MCF 10A (cell line): ENCODE measurements at regions of chr21 and their contacts with region 1.

Region 1: DNA sequence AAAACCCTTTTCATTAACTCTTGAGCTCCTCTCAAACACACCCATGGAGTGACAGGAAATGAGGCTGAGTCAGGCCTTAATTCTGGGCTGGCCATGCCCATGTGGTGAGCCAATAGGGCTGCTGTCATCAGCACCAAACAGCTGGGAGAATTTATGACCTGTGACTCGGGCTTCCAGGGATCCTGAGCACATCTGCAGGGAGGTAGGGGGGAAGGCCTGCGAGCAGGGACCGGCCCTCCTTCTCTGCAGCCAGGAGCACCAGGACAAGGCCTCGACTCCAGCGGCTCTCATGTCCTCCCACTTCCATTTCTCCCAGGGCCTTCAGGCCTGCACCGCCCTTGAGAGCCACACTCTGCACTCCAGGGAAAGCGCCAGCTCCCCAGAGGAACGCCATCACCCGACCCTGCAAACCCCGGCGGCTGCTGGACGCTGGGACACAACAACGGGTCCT is 14.6 kb downstream of the RIPK4 start:
- DNase-seq: peak; percentile 84
- H3K4me3 Mint-ChIP-seq: peak overlapping the region; percentile 64
- H3K27ac Mint-ChIP-seq: peak overlapping the region; percentile 87
- H3K4me1 Mint-ChIP-seq: peaks cover 32% of the 10 kb centered on the region
- H3K27me3 Mint-ChIP-seq: no peaks in the 10 kb centered on the region
- CTCF ChIP-seq: no peak

Region 2: GRCh38 chr21:41737656-41738324 is 14.5 kb before region 1 on chr21:
- CTCF ChIA-PET with region 1: interaction called, 6 read pairs
- POLR2A ChIA-PET with region 1: interaction called, 11 read pairs
- intact Hi-C with region 1: no loop called
- DNase-seq: no peak
- H3K4me3 Mint-ChIP-seq: no peak overlapping the region
- H3K27ac Mint-ChIP-seq: peak overlapping the region; percentile 23
- H3K4me1 Mint-ChIP-seq: no peaks in the 10 kb centered on the region
- H3K27me3 Mint-ChIP-seq: no peaks in the 10 kb centered on the region
- CTCF ChIP-seq: no peak

Region 3: DNA sequence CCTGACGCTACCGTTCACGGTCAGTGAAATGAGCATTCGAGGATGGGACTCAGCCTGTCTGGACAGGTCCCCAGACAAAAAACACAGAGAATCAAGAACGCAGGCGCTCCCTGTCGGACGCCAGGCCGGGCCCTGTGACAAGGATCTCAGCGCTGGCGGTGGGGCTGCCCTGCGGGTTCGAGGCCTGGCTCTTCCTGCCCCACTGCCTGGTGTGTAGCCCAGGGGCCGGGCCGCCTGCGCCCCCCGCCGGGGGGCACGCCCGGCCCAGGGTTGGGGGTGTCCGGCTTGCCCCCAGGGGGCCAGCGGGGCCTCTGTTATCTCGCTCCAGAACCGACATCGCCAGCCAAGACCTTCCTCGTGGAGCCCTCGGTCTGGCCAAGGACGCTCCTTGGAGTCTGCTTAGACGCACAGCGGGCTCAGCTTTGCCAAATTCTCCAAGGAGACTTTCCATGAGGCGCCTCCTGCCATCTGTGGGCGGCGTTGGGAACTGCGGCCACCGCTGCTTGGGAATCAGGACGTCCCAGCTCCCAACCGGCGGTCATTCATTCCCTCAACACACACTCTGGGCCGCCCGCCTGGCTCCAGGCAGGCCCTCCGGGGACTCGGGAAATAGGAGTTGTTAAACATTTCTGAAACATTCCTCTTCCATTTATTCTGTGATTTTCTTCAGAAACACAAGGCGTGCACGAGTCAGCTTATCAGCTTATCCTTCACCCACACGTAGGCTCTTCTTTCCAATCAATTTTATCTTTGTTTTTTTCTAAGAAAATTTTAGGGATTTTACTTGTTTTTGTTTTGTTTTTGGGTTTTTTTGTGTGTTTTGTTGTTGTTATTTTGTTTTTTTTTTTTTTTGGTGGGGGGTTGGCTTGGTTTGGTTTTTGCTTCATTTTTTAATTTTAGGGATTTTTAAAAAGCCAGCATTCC is 26.0 kb after region 1 on chr21:
- CTCF ChIA-PET with region 1: interaction called, 6 read pairs
- POLR2A ChIA-PET with region 1: interaction called, 11 read pairs
- intact Hi-C with region 1: no loop called
- DNase-seq: peak; percentile 94
- H3K4me3 Mint-ChIP-seq: no peak overlapping the region
- H3K27ac Mint-ChIP-seq: peak overlapping the region; percentile 21
- H3K4me1 Mint-ChIP-seq: peaks cover 19% of the 10 kb centered on the region
- H3K27me3 Mint-ChIP-seq: no peaks in the 10 kb centered on the region
- CTCF ChIP-seq: peak; percentile 96

Region 4: GRCh38 chr21:41783441-41784161 is 31.3 kb after region 1 on chr21:
- CTCF ChIA-PET with region 1: interaction called, 6 read pairs
- POLR2A ChIA-PET with region 1: interaction called, 11 read pairs
- intact Hi-C with region 1: no loop called
- DNase-seq: peak; percentile 93
- H3K4me3 Mint-ChIP-seq: peak overlapping the region; percentile 7
- H3K27ac Mint-ChIP-seq: no peak overlapping the region
- H3K4me1 Mint-ChIP-seq: peaks cover 29% of the 10 kb centered on the region
- H3K27me3 Mint-ChIP-seq: no peaks in the 10 kb centered on the region
- CTCF ChIP-seq: no peak